Activated CD8-positive, alpha-beta T cell treated with anti-CD3 and anti-CD28 coated beads, Interleukin-2, amount 10 ng/mL, durations not matched to agents 7 days and 5 days (primary cell): ENCODE measurements at regions of chr11 and their contacts with region 1.

Region 1: GRCh38 chr11:2420502-2421225 is 20.1 kb downstream of the TSSC4 start:
- DNase-seq: peak; percentile 78
- ATAC-seq: peak; percentile 93
- H3K4me3 Mint-ChIP-seq: no peak overlapping the region
- H3K27ac Mint-ChIP-seq: no peak overlapping the region
- H3K4me1 Mint-ChIP-seq: no peaks in the 10 kb centered on the region
- H3K27me3 Mint-ChIP-seq: no peaks in the 10 kb centered on the region

Region 2: GRCh38 chr11:2186669-2187279 is 233.9 kb before region 1 on chr11:
- CTCF ChIA-PET with region 1: interaction called, 14 read pairs
- POLR2A ChIA-PET with region 1: no interaction called
- DNase-seq: peak; percentile 61
- ATAC-seq: peak; percentile 81
- H3K4me3 Mint-ChIP-seq: no peak overlapping the region
- H3K27ac Mint-ChIP-seq: no peak overlapping the region
- H3K4me1 Mint-ChIP-seq: no peaks in the 10 kb centered on the region
- H3K27me3 Mint-ChIP-seq: peaks cover 5% of the 10 kb centered on the region

Region 3: DNA sequence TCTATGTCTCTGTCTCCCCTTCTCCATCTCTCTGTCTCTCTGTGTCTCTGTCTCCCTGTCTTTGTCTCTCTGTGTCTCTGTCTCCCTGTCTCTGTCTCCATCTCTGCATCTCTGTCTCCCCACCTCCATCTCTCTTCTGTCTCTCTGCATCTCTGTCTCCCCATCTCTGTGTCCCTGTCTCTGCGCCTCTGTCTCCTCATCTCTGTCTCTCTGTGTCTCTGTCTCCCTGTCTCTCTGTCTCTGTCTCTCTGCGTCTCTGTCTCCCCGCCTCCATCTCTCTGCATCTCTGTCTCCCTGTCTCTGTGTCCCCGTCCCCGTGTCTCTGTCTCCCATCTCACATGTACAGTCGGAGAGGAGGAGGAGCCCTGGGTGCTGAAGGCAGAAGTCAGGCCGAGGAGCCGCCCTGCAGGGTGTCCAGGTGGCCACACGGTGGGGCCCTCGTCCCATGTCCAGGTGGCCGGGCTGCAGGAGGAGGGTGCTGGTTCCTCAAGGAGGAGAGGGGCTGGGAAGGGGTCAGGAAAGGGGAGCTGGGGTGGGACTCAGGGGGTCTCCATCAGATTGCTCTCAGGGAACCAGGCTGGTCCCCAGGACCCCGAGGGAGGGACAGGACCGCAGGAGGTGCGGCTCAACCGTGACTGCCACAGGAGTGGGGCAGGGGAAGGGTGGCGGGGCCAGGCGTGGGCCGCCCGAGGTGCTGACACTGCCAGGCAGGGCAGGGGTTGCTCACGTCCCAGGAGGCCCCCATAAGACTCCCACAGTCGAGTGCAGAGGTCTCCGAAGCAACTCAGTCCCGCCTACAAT is 223.5 kb before region 1 on chr11:
- CTCF ChIA-PET with region 1: interaction called, 16 read pairs
- POLR2A ChIA-PET with region 1: no interaction called
- DNase-seq: peak; percentile 86
- ATAC-seq: peak; percentile 88
- H3K4me3 Mint-ChIP-seq: no peak overlapping the region
- H3K27ac Mint-ChIP-seq: no peak overlapping the region
- H3K4me1 Mint-ChIP-seq: peaks cover 5% of the 10 kb centered on the region
- H3K27me3 Mint-ChIP-seq: peaks cover 12% of the 10 kb centered on the region

Region 4: GRCh38 chr11:2400069-2400760 is 20.4 kb before region 1 on chr11 and contains the start of gene TSSC4:
- CTCF ChIA-PET with region 1: interaction called, 36 read pairs
- POLR2A ChIA-PET with region 1: interaction called, 3 read pairs
- DNase-seq: peak; percentile 100
- ATAC-seq: peak; percentile 90
- H3K4me3 Mint-ChIP-seq: peak within 1 kb of the TSS; percentile 91
- H3K27ac Mint-ChIP-seq: peak within 1 kb of the TSS; percentile 92
- H3K4me1 Mint-ChIP-seq: peaks cover 18% of the 10 kb centered on the region
- H3K27me3 Mint-ChIP-seq: no peaks in the 10 kb centered on the region
- total RNA-seq, gene TSSC4: 45.3 to 49.4 TPM